ENCODE measurements at regions of chr4 and their contacts with region 1.

Region 1: GRCh38 chr4:177250056-177250696 is 59.5 kb upstream of the NEIL3 start:
- ATAC-seq: peak; percentile 83 to 99 (median 94)
- H3K4me3 ChIP-seq: no peak overlapping the region
- H3K27ac ChIP-seq: no peak overlapping the region
- H3K4me1 ChIP-seq: no peaks in the 10 kb centered on the region

Region 2: GRCh38 chr4:176262243-176262642 is 987.9 kb before region 1 on chr4:
- in situ Hi-C with region 1: no loop called
- ATAC-seq: no peak
- H3K4me3 ChIP-seq: no peak overlapping the region
- H3K27ac ChIP-seq: no peak overlapping the region
- H3K4me1 ChIP-seq: no peaks in the 10 kb centered on the region

Region 3: DNA sequence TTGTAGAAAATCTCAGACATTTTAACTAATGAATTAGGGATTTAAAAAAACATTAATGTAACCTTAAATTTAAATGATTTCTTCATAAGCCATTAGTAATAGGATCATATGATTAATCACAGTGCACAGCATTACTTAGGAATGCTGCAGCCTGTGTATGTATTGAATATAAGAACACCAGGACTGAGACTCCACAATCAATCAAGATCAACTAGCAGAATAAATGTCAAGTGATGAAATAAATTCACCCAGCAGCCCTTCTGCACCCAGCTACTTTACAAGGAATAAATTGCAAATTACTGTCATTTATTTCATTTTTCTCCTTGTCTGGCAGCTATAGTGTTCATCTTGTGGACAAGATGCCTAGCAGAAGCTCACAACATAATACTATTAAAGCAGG is 106.0 kb after region 1 on chr4:
- in situ Hi-C with region 1: no loop called
- ATAC-seq: peak in 5 of 8 experiments; percentile 92 to 95 (median 95)
- H3K4me3 ChIP-seq: no peak overlapping the region
- H3K27ac ChIP-seq: no peak overlapping the region
- H3K4me1 ChIP-seq: peaks cover 15 to 22% of the 10 kb centered on the region in 2 donors

Region 4: DNA sequence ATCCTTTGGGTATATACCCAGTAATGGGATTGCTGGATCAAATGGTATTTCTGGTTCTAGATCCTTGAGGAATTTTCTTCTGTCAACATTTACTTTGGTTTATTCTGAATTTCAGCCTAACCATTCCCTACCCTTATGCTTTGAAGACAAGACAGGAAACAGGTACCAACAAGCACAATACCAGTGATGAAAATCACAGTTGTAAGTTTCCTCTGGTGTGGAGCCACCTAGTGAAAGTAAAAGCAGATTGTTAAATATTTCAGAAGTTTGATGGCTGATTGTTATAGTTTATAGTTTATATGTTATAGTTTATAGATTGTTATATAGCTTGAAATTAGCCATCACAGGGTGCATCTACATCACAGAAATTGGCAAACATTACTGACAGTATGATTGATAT is 296.6 kb after region 1 on chr4:
- in situ Hi-C with region 1: loop called in 1 of 9 experiments (anchors 25 kb)
- ATAC-seq: no peak
- H3K4me3 ChIP-seq: no peak overlapping the region
- H3K27ac ChIP-seq: no peak overlapping the region
- H3K4me1 ChIP-seq: no peaks in the 10 kb centered on the region

Measured in motor neuron (in vitro differentiated cells).